Right ventricle myocardium inferior (tissue), 1 donor: ENCODE measurements at regions of chr3 and their contacts with region 1.

Region 1: GRCh38 chr3:133892541-133893231 is 3.0 kb downstream of the RAB6B start:
- DNase-seq: no peak
- ATAC-seq: peak; percentile 82

Region 2: DNA sequence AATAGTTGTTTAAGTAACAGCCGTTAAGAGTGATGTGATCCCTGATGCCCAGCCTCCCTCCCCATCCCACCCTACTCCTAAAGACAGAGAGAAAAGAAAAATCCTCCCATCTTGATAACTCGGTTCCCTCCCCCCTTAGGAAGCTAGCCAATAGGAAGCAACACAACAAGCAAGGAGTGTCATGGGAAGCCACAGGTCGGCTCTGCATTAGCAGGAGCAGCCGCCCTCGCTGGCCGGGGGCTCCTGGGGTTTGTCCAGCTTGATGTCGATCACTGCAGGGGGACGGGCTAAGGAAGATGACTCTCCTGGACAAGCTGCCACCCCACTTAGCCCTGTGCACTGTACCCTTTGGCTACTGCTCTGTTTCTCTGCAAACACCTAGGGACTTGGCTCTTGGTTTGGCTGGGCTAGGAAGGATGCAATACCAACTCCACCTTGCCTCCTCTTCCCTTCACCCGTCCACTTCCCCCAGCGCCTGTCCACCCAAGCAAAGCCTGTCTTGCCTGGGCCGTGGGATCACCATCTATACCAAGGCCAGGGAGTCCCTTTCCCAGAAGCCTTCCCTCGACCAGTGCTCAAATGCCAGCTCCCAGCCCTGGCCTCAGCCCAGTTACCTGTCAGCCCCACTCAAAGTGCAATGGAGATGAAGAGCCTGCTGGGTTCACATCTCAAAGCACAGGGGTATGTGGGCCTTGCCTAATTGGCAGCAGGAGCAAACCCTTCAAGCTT is 63.9 kb before region 1 on chr3:
- intact Hi-C with region 1: loop called (anchors 2 kb)
- DNase-seq: no peak
- ATAC-seq: peak; percentile 69

Region 3: GRCh38 chr3:133915685-133916658 is 23.3 kb after region 1 on chr3:
- intact Hi-C with region 1: no loop called
- DNase-seq: no peak
- ATAC-seq: peak; percentile 34

Region 4: GRCh38 chr3:134666466-134666865 is 773.8 kb after region 1 on chr3:
- intact Hi-C with region 1: no loop called
- DNase-seq: no peak
- ATAC-seq: no peak